ENCODE measurements at regions of chr19 and their contacts with region 1.

Region 1: GRCh38 chr19:1113033-1113985 is 9.5 kb downstream of the GPX4 start:
- DNase-seq: peak; percentile 97 to 99 (median 97)
- ATAC-seq: peak; percentile 89 to 96 (median 90)
- H3K4me3 ChIP-seq: peak overlapping the region in 5 of 12 donors; percentile 16 to 37 (median 28)
- H3K27ac ChIP-seq: peak overlapping the region in 11 of 12 donors; percentile 54 to 85 (median 70)
- H3K4me1 ChIP-seq: peaks cover 5 to 29% (median 16%) of the 10 kb centered on the region in 12 donors
- H3K27me3 ChIP-seq: no peaks in the 10 kb centered on the region
- CTCF ChIP-seq: peak; percentile 84 to 100 (median 97)
- POLR2A ChIP-seq: no peak

Region 2: GRCh38 chr19:1189419-1189818 is 76.1 kb after region 1 on chr19:
- intact Hi-C with region 1: loop called in 9 of 10 experiments (anchors 5 kb)
- DNase-seq: no peak
- ATAC-seq: no peak
- H3K4me3 ChIP-seq: no peak overlapping the region
- H3K27ac ChIP-seq: no peak overlapping the region
- H3K4me1 ChIP-seq: peaks cover 0 to 16% (median 0%) of the 10 kb centered on the region in 12 donors
- H3K27me3 ChIP-seq: no peaks in the 10 kb centered on the region
- CTCF ChIP-seq: no peak
- POLR2A ChIP-seq: no peak

Region 3: DNA sequence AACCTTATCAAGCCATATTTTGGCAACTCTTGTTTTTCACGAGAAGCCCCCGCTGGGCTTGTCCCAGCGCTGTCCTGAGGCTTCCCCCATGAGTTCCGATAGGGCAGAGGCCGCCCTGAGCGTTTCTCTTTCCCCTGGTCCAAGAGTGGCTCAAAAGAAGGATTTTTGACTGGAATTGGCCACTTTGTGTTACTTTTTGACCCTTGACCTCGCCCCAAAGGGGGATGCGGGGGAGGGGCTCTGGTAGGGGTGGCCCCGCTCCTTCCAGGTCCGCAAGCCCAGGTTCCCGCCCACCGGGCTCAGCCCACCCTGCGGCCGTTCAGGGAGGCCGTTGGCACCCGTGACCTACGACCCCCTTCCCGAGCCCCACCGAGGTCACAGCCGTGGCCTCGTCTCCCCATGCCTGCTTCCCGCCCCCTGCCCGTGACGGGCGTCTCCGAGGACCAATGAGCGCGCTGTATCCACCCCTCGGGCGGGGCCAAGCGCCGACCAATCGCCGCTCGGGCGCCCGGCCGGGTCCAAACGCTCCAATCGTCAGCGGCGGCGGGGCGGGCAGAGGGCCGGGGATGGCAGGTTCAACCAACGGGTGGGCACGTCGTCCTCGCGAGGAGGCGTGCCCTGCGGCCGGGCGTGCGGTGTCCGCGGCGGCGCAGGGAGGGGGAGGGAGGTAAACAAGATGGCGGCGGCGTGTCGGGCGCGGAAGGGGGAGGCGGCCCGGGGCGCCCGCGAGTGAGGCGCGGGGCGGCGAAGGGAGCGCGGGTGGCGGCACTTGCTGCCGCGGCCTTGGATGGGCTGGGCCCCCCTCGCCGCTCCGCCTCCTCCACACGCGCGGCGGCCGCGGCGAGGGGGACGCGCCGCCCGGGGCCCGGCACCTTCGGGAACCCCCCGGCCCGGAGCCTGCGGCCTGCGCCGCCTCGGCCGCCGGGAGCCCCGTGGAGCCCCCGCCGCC is 92.1 kb after region 1 on chr19 and contains the start of gene STK11:
- intact Hi-C with region 1: loop called in 1 of 10 experiments (anchors 5 kb)
- DNase-seq: peak; percentile 99 to 100 (median 100)
- ATAC-seq: peak; percentile 91 to 94 (median 92)
- H3K4me3 ChIP-seq: peak within 1 kb of the TSS; percentile 61 to 88 (median 78)
- H3K27ac ChIP-seq: peak within 1 kb of the TSS; percentile 41 to 96 (median 89)
- H3K4me1 ChIP-seq: peaks cover 0 to 62% (median 36%) of the 10 kb centered on the region in 12 donors
- H3K27me3 ChIP-seq: no peaks in the 10 kb centered on the region
- CTCF ChIP-seq: no peak
- POLR2A ChIP-seq: peak; percentile 22 to 77
- total RNA-seq, gene STK11: 44.7 to 92.0 (median 50.7) TPM

Region 4: DNA sequence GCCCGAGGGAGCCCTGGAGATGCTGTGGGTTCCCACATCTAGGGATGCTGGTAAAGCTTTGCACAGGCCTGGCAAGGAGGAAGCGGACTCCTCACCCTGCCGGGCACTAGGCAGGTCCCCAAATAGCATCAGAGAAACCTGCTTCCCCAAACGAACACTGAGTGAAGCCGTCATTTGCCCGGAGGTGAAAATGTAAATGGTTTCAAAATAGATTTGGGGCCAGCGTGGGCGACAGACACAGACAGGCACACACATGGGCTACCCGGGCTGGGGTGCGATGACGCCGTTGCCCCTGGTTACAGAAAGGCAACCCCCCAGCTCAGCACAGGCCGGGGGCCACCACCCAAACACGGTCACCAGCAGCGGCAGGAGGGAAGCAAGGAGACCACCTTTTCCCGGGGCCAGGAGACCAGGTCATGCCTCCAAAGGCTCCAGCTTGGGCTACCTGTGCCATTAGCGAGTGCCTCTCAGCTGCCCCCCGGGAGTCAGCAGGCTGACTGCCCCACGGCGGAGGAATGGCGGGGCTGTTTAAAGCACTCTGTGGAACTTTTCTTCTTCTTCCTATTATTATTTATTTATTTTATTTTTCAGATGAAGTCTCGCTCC is 222.9 kb after region 1 on chr19:
- intact Hi-C with region 1: no loop called
- DNase-seq: no peak
- ATAC-seq: no peak
- H3K4me3 ChIP-seq: no peak overlapping the region
- H3K27ac ChIP-seq: no peak overlapping the region
- H3K4me1 ChIP-seq: no peaks in the 10 kb centered on the region
- H3K27me3 ChIP-seq: peaks cover 0 to 9% (median 0%) of the 10 kb centered on the region in 9 donors
- CTCF ChIP-seq: no peak
- POLR2A ChIP-seq: no peak